ENCODE measurements at regions of chr3 and their contacts with region 1.

Region 1: GRCh38 chr3:161672478-161672877 is 175.9 kb downstream of the OTOL1 start:
- DNase-seq: no peak
- H3K4me3 ChIP-seq: no peak overlapping the region
- H3K27ac ChIP-seq: no peak overlapping the region
- H3K4me1 ChIP-seq: no peaks in the 10 kb centered on the region
- H3K27me3 ChIP-seq: no peaks in the 10 kb centered on the region
- CTCF ChIP-seq: no peak

Region 2: GRCh38 chr3:161171113-161171512 is 501.4 kb before region 1 on chr3:
- intact Hi-C with region 1: no loop called
- DNase-seq: peak; percentile 26 to 80
- H3K4me3 ChIP-seq: no peak overlapping the region
- H3K27ac ChIP-seq: peak overlapping the region in 1 of 2 donors; percentile 10
- H3K4me1 ChIP-seq: no peaks in the 10 kb centered on the region
- H3K27me3 ChIP-seq: no peaks in the 10 kb centered on the region
- CTCF ChIP-seq: no peak

Region 3: DNA sequence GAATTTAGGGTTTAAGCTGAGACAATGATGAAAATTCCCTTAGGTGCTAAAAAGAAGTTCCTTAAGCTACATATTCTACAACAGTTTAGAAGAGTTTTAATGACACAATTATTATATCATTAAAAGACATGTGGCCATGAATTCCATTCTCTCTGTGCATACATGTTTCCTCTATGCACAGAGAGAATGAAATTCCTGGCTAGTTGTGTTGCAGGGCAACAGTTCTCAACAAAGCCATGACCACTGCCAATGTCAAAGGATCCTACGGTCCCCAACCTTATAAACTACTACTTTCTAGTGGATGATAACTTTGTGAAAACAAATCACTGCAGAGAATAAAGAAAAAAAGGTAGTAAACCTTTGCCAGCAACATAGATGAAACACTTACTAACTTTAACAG is 53.1 kb before region 1 on chr3:
- intact Hi-C with region 1: loop called (anchors 2 kb)
- DNase-seq: no peak
- H3K4me3 ChIP-seq: no peak overlapping the region
- H3K27ac ChIP-seq: no peak overlapping the region
- H3K4me1 ChIP-seq: no peaks in the 10 kb centered on the region
- H3K27me3 ChIP-seq: no peaks in the 10 kb centered on the region
- CTCF ChIP-seq: no peak